ENCODE measurements at regions of chr7 and their contacts with region 1.

Region 1: DNA sequence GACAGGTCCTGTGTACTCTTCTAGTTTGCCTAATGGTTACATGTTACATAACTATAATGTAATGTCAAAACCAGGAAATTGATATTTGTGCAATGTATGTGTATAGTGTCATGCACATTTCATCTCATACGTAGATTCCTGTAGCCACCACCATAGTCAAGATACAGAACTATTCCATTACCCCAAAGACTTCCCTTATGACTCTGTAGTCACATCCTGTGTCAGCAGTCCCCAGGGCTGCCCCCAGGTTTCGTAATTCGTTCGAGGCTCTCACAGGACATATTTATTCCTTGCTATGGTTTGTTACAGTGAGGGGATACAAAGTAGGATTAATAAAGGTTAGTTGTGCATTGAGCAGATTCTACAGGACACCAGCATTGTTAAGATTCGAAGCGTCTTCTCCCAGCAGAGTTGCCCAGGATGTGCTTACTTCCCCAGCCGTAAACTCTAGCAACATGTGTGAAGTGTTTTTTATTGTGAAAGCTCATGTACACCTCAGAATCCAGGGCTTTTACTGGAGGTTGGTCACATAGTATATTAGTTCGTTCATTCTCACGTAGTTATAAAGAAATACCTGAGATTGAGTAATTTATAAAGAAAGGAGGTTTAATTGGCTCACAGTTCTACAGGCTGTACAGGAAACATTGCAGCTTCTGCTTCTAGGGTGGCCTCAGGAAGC is 18.6 kb downstream of the RABGEF1 start:
- DNase-seq: peak in 1 of 10 donors; percentile 37

Region 2: GRCh38 chr7:66697449-66698438 is 61.3 kb before region 1 on chr7:
- intact Hi-C with region 1: loop called (anchors 10 kb)
- DNase-seq: peak; percentile 43 to 94 (median 72)

Measured in posterior cingulate gyrus (tissue), 11 donors.